Cardiac septum (tissue), 1 donor: ENCODE measurements at regions of chr11 and their contacts with region 1.

Region 1: DNA sequence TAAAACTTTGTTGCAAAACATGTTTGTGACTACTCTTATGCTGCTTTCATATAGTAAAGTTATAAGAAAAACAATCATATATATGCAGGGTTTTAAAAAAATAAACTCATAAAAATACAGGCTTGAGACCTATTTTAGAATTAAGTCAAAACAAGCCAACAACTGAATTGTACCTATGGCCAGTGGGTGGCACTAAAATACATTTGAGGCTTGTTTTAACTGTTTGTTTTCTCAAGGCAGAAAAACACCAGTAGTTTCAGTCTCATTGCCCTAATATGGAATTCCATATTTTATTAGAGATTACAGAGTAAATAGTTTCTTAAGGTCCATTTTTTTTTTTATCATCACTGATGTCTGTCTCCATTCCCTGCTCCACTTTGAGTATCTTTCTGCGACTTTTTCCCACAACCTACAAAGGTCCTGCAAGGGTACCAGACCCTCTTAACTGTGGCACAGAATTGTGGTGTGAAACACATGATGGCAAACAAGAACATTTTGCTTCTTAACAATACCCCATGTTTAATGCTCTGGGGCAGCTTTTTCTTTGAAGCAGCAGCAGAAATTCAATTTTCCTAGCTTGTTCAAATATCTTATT is 8.5 kb upstream of the CCDC89 start:
- DNase-seq: no peak

Region 2: GRCh38 chr11:85759915-85760314 is 65.4 kb after region 1 on chr11:
- intact Hi-C with region 1: no loop called
- DNase-seq: no peak

Region 3: GRCh38 chr11:85826116-85826855 is 131.8 kb after region 1 on chr11:
- intact Hi-C with region 1: loop called (anchors 10 kb)
- DNase-seq: no peak